GM13976 (cell line): ENCODE measurements at regions of chr3 and their contacts with region 1.

Region 1: GRCh38 chr3:13106308-13107001 is 33.2 kb upstream of the IQSEC1 start:
- DNase-seq: no peak
- CTCF ChIP-seq: no peak

Region 2: DNA sequence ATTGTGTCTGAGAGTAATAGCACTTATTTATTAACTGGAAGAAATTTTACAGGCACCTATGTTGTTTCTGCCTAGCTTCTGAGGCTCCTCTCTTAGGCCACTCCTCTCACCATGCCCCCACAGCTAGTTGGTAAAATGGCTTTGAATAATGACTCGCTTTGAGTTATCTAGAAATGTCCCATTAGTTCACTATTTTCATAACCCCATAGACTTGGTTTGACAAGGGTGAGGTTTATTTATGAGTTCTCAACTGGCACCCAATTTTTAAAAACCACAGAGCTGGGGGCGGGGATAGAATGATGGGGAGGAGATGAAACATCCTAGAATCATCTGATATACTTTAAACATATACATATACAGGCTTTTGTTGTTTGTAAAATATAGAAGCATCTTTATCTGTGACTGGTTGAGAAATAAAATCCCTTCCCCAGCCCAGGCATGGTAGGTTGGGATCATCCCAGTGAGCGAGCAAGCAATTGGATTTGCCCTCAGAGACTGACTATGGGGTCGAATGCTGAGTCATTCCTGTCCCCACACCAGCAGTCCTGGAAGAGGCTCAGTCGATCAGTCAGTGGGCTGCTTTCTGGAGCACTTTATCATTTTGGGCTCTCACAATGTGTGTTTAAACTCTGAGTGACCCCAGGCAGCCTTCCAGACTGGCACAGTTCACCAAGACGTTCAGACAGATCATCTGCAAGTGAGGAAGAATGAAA is 682.4 kb before region 1 on chr3:
- in situ Hi-C with region 1: no loop called
- DNase-seq: no peak
- CTCF ChIP-seq: no peak

Region 3: DNA sequence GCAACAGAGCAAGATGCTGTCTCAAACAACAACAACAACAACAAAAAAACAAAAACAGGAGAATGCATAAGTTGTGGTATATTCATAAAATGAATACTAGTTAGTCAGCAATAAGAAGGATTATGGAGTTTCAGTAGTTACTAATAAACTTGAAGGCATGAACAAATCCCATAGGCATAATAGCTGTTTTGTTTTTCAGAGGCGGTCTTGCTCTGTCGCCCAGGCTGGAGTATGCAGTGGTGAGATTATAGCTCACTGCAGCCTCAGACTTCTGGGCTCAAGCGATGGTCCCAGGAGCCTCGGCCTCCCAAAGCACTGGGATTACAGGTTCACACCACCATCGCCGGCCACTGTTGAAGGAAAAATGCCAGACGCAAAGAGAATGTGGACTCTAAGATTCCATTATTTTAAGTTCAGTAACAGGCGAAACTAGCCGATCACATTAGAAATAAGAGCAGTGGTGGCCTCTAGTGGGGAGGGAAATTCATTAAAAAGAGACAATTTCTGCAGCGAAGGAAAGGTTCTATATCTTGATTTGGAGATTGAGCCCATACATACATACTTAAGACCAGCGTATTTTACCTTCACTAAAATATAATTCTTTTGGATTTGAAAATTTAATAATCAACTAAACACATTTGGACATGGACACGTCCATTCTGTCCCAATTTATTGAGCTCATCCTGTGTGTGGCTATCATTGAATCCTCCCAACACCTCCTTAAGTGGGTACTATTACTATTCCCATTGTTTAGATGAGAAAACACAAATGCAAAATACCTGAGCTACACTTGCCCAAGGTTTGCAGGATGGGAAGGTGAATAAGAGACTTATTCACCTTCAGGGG is 346.3 kb after region 1 on chr3:
- in situ Hi-C with region 1: loop called (anchors 10 kb)
- DNase-seq: peak; percentile 65
- CTCF ChIP-seq: peak; percentile 27

Region 4: DNA sequence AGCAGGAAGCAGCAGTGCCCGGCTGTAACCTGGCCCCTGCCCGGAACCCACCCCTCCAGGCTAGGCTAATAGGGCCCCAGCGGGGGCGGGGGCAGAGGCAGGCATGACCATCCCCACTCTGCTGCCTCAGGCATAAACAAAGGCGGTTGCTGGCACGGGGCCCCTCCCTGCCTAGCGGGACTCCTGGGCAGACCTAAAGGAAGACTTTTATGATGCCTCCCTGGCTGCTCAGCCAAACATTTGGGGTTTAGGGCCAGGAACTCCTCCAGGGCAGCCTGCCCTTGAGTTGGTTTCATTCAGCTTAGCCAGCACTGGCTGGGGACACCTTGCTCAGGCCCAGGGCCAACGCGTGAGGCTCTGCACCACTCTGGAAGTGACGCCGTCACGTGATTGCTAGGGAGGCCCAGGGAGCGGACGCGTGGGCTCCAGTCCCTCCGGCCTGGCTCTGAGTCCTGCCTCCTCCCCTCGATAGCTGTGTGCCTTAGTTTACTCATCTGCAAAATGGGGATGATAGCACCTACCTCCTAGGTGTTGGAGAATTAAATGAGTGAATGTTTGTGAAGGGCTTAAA is 401.4 kb after region 1 on chr3:
- in situ Hi-C with region 1: no loop called
- DNase-seq: no peak
- CTCF ChIP-seq: no peak